A673 (cell line): ENCODE measurements at regions of chr7 and their contacts with region 1.

Region 1: GRCh38 chr7:148547951-148548350 is 42.6 kb upstream of the C7orf33 start:
- DNase-seq: no peak
- H3K4me3 ChIP-seq: no peak overlapping the region
- H3K27ac ChIP-seq: no peak overlapping the region
- H3K4me1 ChIP-seq: no peaks in the 10 kb centered on the region
- H3K27me3 ChIP-seq: no peaks in the 10 kb centered on the region
- CTCF ChIP-seq: no peak

Region 2: DNA sequence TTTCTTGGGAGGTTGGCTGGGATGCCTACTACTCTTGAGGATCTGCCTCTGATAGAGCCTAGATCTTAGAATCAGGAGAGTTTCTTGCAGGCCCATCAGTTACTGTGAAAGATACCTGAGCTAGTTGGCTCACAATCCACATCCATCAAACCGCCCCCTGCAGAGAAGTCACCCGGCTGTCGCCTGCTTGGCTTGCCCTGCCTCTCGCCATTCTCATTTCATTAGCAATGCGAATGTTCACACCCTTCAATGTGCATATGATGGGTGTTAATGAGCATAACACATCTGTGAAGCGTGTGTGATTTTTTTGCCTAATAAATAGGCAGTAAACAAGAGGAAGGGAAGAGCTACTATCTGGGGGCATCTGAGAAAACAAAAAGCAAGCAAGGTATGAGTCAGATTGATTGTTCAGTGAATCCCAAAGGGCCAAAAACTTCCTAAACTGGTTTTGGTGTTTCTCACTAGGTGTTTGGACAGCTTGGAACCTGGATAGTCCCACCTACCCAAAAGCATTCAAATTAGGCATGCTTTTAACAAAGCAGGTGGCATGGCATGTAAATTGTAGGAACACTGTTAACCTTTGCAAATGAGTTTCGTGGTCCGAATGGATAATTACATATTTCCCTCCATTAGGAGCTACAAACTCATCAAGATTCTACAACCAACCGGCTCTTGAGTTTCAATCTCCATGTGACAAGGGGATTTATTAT is 229.7 kb before region 1 on chr7:
- CTCF ChIA-PET with region 1: no interaction called
- POLR2A ChIA-PET with region 1: no interaction called
- intact Hi-C with region 1: no loop called
- DNase-seq: no peak
- H3K4me3 ChIP-seq: no peak overlapping the region
- H3K27ac ChIP-seq: no peak overlapping the region
- H3K4me1 ChIP-seq: no peaks in the 10 kb centered on the region
- H3K27me3 ChIP-seq: no peaks in the 10 kb centered on the region
- CTCF ChIP-seq: no peak

Region 3: DNA sequence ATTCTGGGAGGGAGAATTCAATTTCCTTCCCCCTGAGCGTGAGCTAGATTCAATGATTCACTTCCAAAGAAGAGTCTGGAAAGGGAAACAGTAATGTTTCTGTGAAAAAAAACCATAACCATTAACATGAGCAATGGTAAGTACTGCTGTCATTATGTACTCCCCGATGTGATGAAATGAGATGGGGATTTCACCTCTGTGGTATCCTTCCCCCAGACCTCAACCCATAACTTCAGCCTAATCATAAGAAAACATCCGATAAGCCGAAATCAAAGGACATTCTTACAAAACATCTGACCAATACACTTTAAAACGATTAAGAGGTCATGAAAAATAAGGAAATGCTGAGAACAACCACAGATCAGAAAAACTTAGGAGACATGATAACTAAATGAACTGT is 308.9 kb after region 1 on chr7:
- CTCF ChIA-PET with region 1: no interaction called
- POLR2A ChIA-PET with region 1: interaction called, 10 read pairs
- intact Hi-C with region 1: no loop called
- DNase-seq: no peak
- H3K4me3 ChIP-seq: no peak overlapping the region
- H3K27ac ChIP-seq: no peak overlapping the region
- H3K4me1 ChIP-seq: peaks cover 49% of the 10 kb centered on the region
- H3K27me3 ChIP-seq: no peaks in the 10 kb centered on the region
- CTCF ChIP-seq: no peak